ENCODE measurements at regions of chr1 and their contacts with region 1.

Region 1: DNA sequence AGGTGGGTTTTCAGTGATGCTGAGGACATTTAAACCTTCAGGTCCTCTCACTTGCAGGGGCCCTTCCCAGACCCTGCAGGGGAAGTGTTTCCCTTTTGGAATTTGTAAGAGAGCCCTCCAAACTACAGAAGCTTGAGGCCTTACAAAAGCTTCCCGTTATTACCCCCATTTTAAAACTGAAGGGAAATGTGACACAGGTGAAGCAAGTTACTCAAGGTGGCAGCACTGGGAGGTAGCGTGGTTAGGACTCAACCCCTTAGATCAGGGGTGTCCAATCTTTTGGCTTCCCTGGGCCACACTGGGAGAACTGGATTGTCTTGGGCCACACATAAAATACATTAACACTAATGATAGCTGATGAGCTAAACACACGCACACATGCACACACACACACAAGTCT is 15.9 kb upstream of the ZC3H12A start:
- DNase-seq: no peak
- ATAC-seq: no peak
- H3K4me3 ChIP-seq: no peak overlapping the region
- H3K27ac ChIP-seq: no peak overlapping the region
- H3K4me1 ChIP-seq: peaks cover 6 to 8% of the 10 kb centered on the region in 2 donors
- H3K27me3 ChIP-seq: no peaks in the 10 kb centered on the region
- CTCF ChIP-seq: no peak
- POLR2A ChIP-seq: no peak

Region 2: DNA sequence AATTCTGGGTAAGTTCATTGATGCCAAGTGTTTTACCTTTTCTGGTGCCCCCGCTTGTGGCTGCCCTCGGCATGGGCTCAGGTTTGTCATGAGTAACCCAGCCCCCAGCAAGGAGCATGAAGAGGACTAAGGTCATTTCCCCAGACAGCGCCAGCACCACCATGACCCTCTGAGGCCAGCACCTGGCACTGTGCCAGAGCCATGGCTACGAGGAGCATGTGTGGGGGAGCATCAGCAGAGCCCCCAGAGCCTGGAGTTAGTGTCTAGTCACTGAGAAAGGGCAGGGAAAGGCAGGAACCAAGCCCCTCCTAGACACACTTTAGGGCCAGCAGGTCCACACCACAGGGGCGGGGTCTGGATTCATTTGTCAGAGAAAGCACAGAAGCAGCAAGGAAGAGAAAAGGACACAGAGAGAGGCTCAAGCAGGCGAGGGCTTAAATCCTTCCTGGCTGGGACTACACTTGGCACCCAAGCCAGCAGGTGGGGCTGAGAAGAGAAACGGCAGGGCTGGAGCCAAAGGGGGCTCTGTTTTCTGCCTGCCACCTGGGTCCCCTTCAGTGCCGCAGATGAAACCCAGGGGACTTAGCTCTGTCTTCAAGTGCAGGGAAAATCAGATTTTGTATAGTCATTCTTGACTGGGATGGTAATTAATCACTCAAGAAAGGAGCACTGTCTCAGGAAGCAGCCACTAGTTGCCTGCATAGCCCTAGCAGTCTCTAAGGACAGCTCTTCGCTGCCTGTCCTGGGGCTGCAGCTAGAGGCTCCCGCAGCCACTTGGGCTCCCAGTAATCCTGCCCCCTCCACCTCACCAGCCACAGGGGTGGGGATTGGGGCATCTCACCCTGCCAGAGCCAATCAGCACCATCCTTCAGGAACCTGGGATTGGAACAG is 63.7 kb before region 1 on chr1:
- in situ Hi-C with region 1: no loop called
- intact Hi-C with region 1: no loop called
- DNase-seq: no peak
- ATAC-seq: no peak
- H3K4me3 ChIP-seq: no peak overlapping the region
- H3K27ac ChIP-seq: no peak overlapping the region
- H3K4me1 ChIP-seq: no peaks in the 10 kb centered on the region
- H3K27me3 ChIP-seq: peaks cover 3 to 28% (median 13%) of the 10 kb centered on the region in 3 donors
- CTCF ChIP-seq: no peak
- POLR2A ChIP-seq: no peak

Region 3: DNA sequence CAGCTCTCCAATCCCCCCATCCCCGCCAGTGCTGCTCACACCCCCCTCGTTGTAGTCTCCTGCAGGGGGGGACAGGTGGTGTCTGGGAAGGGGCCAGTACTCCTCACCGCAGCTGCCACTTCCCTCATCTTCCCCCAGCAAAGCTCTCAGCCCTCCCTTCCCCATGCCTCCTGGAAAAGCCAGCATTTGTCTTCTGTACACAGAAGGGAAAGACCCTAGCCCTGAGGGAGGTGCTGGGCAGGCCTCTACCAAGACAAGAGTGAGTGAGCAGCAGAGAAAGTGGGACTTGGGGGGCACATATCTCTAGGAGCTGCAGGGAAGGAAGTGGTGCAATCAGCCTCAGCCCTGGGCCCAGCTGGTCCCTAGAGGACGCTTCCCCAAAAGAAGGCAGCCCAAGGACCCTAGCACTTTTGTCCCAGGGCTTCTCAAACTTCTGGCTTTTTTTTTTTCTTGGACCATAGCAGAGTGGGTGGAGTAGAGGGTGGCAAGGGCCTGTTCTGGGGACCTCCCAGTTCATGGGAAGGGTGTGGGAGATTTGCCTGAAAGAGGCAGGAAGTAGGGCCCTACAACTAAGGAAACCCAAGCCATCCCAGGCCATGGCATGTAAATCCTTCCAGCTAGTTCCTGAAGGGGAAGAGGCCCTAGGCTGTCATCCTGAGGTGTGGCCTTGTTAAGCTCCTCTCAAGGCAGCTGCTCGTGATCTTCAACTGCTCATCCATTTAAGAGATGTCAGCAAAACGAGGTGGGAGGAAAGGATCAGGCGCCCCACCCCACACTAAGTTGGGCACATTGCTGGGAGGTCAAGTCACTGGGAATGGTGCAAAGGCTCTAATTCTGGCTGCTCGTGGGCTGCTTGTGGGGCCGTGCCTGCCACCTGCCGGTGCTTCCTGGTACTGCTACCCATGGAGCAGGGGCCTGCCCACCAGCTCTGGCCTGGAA is 28.4 kb after region 1 on chr1:
- in situ Hi-C with region 1: loop called in 2 of 4 experiments (anchors 5 kb)
- intact Hi-C with region 1: loop called (anchors 1 kb)
- DNase-seq: peak; percentile 54 to 90
- ATAC-seq: peak; percentile 79 to 83
- H3K4me3 ChIP-seq: no peak overlapping the region
- H3K27ac ChIP-seq: peak overlapping the region; percentile 66 to 89 (median 76)
- H3K4me1 ChIP-seq: peaks cover 25 to 27% of the 10 kb centered on the region in 2 donors
- H3K27me3 ChIP-seq: no peaks in the 10 kb centered on the region
- CTCF ChIP-seq: peak; percentile 98 to 99 (median 99)
- POLR2A ChIP-seq: no peak

Region 4: DNA sequence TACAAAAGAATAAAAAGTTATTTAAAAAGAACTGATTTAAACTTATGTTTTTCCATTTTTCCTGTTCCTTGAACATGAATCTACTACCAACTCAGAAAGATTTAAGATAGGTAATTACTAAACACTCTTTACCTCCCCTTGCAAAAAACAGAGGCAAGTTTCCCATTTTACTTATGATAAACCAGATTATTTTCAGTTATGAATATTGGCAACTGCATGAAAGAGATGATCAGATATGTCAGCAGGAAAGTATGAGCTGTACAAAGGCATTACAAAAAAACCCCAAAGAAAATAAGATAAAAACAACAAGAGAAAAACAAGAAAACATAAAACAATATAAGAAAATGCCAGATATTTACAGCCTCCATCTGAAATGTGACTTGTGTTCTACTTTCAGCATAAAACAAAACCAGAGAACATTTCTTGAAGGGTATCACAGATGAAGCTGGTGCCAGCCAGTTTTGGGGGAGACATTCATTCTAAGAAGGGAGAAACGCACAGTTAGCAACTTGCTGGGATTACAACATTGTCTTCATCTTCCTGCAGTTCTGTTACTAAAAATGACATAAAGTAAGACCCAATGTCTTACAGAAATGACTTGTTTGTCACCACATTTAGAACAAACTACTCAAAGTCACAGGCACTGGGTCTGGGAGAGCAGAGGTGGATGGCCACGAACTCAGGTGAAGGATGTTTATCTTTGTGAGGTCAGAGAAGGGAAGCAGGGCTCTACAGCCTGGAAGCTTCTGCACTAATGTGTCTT is 35.0 kb after region 1 on chr1:
- in situ Hi-C with region 1: loop called in 2 of 4 experiments (anchors 5 kb)
- intact Hi-C with region 1: no loop called
- DNase-seq: no peak
- ATAC-seq: no peak
- H3K4me3 ChIP-seq: no peak overlapping the region
- H3K27ac ChIP-seq: no peak overlapping the region
- H3K4me1 ChIP-seq: peaks cover 0 to 1% of the 10 kb centered on the region in 2 donors
- H3K27me3 ChIP-seq: no peaks in the 10 kb centered on the region
- CTCF ChIP-seq: no peak
- POLR2A ChIP-seq: no peak

Region 5: GRCh38 chr1:37553927-37554808 is 95.6 kb after region 1 on chr1 and contains the start of gene SNIP1:
- in situ Hi-C with region 1: no loop called
- intact Hi-C with region 1: loop called (anchors 5 kb)
- DNase-seq: peak; percentile 91 to 92
- ATAC-seq: peak; percentile 98
- H3K4me3 ChIP-seq: peak within 1 kb of the TSS; percentile 71 to 100 (median 92)
- H3K27ac ChIP-seq: peak within 1 kb of the TSS; percentile 83 to 94 (median 88)
- H3K4me1 ChIP-seq: peaks cover 17 to 21% of the 10 kb centered on the region in 2 donors
- H3K27me3 ChIP-seq: no peaks in the 10 kb centered on the region
- CTCF ChIP-seq: no peak
- POLR2A ChIP-seq: peak; percentile 65 to 81
- total RNA-seq, gene SNIP1: 5.2 to 9.2 (median 6.5) TPM

Region 6: GRCh38 chr1:37682334-37682987 is 223.9 kb after region 1 on chr1:
- in situ Hi-C with region 1: loop called (anchors 10 kb)
- intact Hi-C with region 1: loop called (anchors 1 kb)
- DNase-seq: peak in 1 of 2 donors; percentile 46
- ATAC-seq: peak in 1 of 2 donors; percentile 72
- H3K4me3 ChIP-seq: no peak overlapping the region
- H3K27ac ChIP-seq: no peak overlapping the region
- H3K4me1 ChIP-seq: no peaks in the 10 kb centered on the region
- H3K27me3 ChIP-seq: no peaks in the 10 kb centered on the region
- CTCF ChIP-seq: peak; percentile 58 to 82 (median 72)
- POLR2A ChIP-seq: no peak